H1 (cell line): ENCODE measurements at regions of chr6 and their contacts with region 1.

Region 1: GRCh38 chr6:149834513-149835481 is 29.4 kb downstream of the LRP11 start:
- DNase-seq: peak in 1 of 2 experiments; percentile 91
- H3K4me3 ChIP-seq: no peak overlapping the region
- H3K27ac ChIP-seq: no peak overlapping the region
- H3K4me1 ChIP-seq: no peaks in the 10 kb centered on the region
- H3K27me3 ChIP-seq: no peaks in the 10 kb centered on the region
- CTCF ChIP-seq: peak in 2 of 3 experiments; percentile 84 to 85; a peak in 3 of 4 replicates
- EP300 ChIP-seq: no peak
- POLR2A ChIP-seq: no peak
- RAD21 ChIP-seq: peak; percentile 82 to 88

Region 2: DNA sequence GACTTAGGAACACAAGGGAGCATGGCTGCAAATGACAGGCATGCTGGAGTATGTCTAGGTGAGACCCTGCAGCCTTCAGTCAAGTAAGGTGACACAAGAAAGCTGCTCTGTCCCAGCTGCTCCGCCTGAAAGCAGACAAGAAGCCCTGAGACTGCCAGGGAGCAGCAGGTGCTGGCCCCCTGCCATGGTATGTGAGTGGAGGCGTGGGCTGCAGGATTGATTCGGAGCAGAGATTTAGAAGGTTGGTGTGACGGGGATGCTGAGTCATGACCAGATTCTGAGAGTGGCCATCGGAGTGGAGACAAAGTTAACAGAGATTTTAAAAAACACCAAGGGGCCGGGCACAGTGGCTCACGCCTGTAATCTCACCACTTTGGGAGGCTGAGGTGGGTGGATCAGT is 11.5 kb after region 1 on chr6:
- CTCF ChIA-PET with region 1: interaction called, 195 read pairs
- POLR2A ChIA-PET with region 1: no interaction called
- DNase-seq: no peak
- H3K4me3 ChIP-seq: no peak overlapping the region
- H3K27ac ChIP-seq: no peak overlapping the region
- H3K4me1 ChIP-seq: no peaks in the 10 kb centered on the region
- H3K27me3 ChIP-seq: no peaks in the 10 kb centered on the region
- CTCF ChIP-seq: no peak
- EP300 ChIP-seq: no peak
- POLR2A ChIP-seq: no peak
- RAD21 ChIP-seq: no peak

Region 3: DNA sequence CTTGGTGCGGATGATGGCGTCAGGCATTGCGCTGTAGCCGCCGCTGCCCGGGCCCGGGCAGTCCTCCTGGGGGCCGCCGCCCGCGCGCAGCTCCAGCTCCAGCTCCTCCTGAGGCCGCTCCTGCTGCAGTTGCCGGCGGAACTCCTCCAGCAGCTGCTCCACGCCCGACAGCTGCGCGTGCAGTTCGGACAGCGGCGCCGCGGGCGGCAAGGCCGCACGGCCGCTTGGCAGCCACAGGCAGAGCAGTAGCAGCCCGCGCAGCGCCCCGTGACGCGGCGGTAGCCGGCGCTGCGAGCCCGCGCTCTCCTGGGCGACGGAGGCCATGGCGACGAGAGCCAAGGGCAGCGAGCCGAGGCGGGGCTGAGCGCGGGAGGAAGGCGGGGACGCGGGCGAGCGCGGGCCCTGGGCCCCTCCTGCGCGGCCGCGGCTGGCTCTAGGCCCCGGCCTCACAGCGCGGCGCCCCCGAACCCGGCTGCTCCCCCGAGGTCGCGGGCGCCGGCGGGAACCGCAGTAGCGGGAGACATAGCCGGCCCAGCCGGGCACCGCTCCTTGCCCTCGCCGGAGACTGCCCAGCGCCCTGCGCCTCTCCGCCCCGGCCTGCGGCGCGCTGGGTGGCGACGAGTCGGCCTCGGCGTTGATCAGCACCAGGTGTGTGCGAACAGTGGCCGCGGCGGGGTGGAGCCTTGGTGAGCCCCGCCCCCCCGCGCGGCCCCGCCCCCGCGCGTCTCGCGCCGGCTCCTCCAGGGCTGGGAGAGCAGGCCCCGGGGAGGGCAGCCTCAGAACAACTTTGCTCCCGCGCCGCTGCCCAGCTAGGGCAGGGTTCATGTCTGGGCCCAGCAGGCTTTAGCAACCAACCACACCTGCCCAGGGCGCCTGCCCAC is 29.1 kb after region 1 on chr6 and contains the start of gene LRP11:
- CTCF ChIA-PET with region 1: interaction called, 33 read pairs
- POLR2A ChIA-PET with region 1: interaction called, 3 read pairs
- DNase-seq: peak; percentile 66 to 93
- H3K4me3 ChIP-seq: peak within 1 kb of the TSS; percentile 48 to 80 (median 74)
- H3K27ac ChIP-seq: peak within 1 kb of the TSS; percentile 84
- H3K4me1 ChIP-seq: peaks cover 5 to 20% (median 11%) of the 10 kb centered on the region in 4 experiments
- H3K27me3 ChIP-seq: peaks cover 0 to 13% (median 5%) of the 10 kb centered on the region in 4 experiments; a peak in 5 of 7 replicates
- CTCF ChIP-seq: no peak
- EP300 ChIP-seq: no peak
- POLR2A ChIP-seq: peak; percentile 33 to 78
- RAD21 ChIP-seq: no peak
- total RNA-seq, gene LRP11: 20.0 TPM in 2 replicates

Region 4: DNA sequence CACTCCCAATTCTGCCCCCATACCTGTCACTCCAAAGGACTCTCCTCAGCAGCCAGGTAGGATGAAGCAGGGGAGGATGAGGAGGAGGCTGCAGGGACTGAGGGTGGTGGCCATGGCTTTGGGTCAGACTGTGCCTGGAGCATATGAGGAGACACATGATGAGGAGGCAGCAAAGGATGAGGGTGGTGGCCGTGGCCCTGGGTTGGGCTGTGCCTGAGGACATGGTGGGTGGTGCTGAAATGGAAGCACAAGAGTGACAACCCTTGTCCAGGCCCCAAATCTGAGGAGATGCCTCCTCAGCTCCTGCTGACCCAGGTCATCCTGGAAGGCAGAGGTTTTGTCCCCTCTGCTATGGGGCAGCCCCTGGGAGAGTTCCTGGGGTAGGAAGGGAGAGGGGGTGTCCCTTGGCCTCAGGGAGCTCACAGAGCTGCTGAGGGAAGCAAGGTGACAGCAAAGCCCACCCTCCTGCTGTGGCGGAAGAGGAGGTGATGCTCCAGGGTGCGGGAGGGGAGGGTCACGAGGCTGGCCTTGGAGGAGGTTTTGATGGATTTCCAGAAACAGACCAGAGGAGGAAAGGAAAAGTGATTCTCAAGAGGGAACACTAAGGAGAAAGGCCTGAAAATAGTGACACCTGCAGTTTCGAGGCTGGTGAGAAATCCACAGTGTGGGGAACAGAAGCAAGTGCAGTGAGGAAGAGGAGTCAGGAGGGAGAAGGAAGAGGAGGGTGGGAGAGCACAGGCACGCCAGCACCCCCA is 83.5 kb after region 1 on chr6:
- CTCF ChIA-PET with region 1: interaction called, 19 read pairs
- POLR2A ChIA-PET with region 1: no interaction called
- DNase-seq: peak in 1 of 2 experiments; percentile 14
- H3K4me3 ChIP-seq: no peak overlapping the region
- H3K27ac ChIP-seq: no peak overlapping the region
- H3K4me1 ChIP-seq: peaks cover 0 to 5% (median 0%) of the 10 kb centered on the region in 4 experiments; a peak in 2 of 7 replicates
- H3K27me3 ChIP-seq: peaks cover 15 to 32% (median 28%) of the 10 kb centered on the region in 4 experiments
- CTCF ChIP-seq: no peak
- EP300 ChIP-seq: no peak
- POLR2A ChIP-seq: no peak
- RAD21 ChIP-seq: no peak